Right ventricle myocardium inferior (tissue), 1 donor: ENCODE measurements at regions of chr1 and their contacts with region 1.

Region 1: GRCh38 chr1:175481126-175482066 is 262.0 kb downstream of the TNR start:
- DNase-seq: no peak
- ATAC-seq: no peak

Region 2: GRCh38 chr1:175072099-175072951 is 409.1 kb before region 1 on chr1:
- intact Hi-C with region 1: no loop called
- DNase-seq: no peak
- ATAC-seq: peak; percentile 78

Region 3: DNA sequence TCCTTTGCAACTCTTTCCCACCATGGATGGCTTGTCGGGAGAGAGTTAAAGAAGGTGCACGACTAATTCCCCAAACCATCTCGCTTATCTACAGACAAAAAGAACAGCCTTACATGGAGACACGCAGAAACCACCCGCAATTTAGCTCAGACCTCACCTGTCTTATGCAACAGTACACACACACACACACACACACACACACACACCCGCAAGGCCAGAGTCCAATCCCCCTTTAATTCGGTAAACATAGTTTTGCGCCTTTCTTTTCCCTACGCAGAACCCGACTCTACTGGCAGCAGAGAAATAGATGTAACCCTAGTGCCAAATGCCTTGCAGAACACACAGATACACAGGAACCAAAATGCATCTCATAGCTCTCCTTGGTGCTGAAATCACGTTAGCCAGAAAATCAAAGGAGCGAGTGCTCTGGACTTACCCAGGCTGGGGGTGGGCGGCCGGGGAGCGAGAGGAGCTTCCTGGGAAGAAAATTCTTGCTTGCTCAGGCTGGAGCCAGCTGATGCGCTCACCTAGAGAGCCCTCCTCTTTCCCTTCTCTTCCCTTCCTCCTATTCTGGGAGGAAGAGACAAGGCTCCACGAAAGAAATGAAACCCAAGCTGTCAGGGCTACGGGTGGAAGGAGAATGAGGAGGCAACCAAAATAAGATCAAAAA is 261.5 kb after region 1 on chr1:
- intact Hi-C with region 1: loop called (anchors 10 kb)
- DNase-seq: no peak
- ATAC-seq: no peak

Region 4: DNA sequence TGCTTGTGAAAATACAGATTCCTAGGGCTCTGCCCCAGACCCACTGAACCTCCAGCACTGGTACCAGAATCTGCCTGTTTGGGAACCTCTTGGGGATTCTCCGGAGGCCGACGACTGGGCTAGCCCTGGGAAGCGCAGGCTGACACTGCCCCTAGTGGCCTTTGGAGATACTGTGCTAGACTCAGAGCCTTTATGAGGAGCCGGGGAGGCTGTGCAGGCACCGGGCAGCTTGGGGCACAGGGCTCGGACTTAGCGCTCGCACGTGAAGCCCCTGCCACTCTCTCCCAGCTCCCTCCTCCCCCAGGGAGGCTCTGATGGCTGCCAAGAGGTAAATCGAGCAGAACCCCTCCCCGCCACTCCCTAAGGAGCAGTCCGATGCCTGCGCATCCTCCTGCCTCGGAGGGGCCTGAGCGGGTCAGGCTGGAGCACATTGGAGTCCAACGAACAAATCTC is 406.6 kb after region 1 on chr1:
- intact Hi-C with region 1: loop called (anchors 5 kb)
- DNase-seq: peak; percentile 75
- ATAC-seq: peak; percentile 83

Region 5: DNA sequence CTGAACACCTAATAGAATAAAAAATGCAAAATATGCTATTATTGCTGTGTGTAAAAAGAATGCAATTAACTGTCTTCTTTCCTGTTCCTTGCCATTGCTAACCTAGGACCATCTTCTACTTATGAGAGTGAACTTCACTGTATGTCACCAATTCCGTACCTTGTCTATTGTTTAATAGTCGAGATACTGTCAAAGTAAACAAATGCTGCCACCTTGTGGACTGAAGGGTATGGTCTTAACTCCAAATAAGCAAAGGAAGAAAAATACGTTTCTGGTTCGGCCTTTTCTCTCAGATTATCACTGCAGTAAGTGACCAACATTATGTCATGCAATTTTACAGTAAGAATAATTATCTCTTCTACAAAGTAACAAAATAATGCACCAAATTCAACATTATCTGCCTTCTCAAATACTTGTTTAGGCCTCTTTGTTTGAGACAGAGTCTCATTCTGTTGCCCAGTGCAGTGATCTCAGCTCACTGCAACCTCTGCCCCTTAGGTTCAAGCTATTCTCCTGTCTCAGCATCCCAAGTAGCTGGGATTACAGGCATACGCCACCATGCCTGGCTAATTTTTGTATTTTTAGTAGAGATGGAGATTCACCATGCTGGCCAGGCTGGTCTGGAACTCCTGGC is 592.2 kb after region 1 on chr1:
- intact Hi-C with region 1: loop called (anchors 10 kb)
- DNase-seq: no peak
- ATAC-seq: peak; percentile 54